ENCODE measurements at regions of chr13 and their contacts with region 1.

Region 1: DNA sequence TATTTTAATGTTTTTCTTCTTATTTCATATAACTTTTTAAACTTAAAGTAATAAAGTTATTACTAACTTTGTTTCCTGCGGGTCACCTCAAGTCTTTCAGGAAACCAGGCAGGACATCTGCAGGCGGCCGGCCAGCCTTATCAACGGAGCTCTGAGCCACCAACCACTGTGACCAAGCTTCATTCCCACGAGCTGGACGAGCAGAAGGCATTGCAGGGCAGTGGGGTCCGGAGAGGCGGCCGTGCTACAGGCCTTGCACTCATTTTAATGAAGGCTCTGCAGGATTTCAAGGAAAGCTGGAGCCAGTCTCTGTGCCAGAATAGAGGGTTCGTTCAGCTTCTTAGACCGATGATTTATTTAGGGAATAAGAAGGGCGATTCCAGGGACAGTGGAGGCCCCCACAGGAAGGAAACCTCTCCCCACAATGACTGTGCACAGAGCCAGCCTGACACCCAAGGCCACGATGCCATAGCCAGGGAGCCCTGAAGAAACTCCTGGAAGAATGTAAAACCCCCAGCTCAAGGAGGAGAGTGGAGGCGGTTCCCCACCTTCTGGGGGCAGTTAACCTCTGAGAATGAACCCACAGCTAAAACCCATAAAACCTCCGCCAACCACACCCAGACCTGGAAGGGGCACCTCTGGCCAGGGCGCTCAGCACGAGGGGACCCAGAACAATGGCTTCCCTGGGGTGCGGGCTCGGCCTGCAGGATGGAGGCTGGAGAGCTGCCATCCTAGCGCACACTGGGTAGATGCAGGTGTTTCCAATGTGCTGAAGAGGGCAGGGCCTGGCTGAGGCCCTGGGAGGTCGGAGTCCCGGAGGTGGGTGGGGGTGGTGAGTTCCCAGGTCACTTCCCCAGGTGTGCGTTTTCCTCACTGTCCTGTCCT is 75.0 kb downstream of the RASA3 start:
- DNase-seq: no peak
- H3K4me3 ChIP-seq: no peak overlapping the region
- CTCF ChIP-seq: no peak

Region 2: GRCh38 chr13:113814435-113814821 is 243.0 kb before region 1 on chr13:
- in situ Hi-C with region 1: loop called (anchors 5 kb)
- DNase-seq: peak; percentile 36
- H3K4me3 ChIP-seq: no peak overlapping the region
- CTCF ChIP-seq: no peak

Region 3: GRCh38 chr13:113970810-113971470 is 86.5 kb before region 1 on chr13:
- in situ Hi-C with region 1: loop called (anchors 5 kb)
- DNase-seq: peak; percentile 73
- H3K4me3 ChIP-seq: no peak overlapping the region
- CTCF ChIP-seq: no peak

Region 4: GRCh38 chr13:114099191-114099590 is 41.8 kb after region 1 on chr13:
- in situ Hi-C with region 1: no loop called
- DNase-seq: peak; percentile 69
- H3K4me3 ChIP-seq: no peak overlapping the region
- CTCF ChIP-seq: no peak

Region 5: GRCh38 chr13:114110091-114110829 is 52.9 kb after region 1 on chr13:
- in situ Hi-C with region 1: loop called (anchors 5 kb)
- DNase-seq: no peak
- H3K4me3 ChIP-seq: no peak overlapping the region
- CTCF ChIP-seq: no peak

Region 6: DNA sequence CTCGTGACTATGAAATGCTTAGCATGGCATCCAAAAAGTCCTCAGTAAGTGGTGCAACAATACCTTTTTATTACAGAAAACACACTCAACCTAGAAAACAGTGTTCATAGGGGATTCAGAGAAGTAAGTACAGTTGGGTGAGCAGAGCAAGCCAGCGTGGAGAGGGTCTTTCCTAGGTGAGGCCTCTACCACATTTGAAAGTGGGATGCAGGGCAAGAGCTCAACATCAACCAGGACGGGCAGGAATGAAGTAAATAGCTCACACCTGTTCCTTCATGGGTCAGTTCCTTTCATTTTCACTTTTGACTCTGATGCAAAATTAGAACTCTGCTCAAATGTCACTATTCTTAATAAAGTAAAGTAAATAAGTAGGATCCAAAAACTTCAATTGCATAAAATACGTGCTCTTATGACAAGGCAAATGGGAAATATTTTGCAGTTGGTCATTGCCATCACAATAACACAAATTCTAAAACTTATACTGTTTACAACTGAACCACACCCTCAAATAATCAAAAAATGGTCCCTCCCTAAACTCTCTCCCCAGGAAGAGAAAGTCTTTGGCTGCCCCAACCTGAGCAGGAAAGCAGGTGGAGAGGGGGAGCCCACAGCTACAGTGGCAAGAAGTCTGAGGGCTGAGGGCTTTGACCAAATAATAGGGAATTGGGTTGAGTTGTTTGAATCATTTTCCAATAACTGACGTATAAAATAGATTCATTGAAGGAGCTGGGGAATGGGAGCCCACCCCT is 277.1 kb after region 1 on chr13:
- in situ Hi-C with region 1: no loop called
- DNase-seq: no peak
- H3K4me3 ChIP-seq: no peak overlapping the region
- CTCF ChIP-seq: no peak

Measured in astrocyte of the cerebellum (primary cell).